ENCODE measurements at regions of chr2 and their contacts with region 1.

Region 1: GRCh38 chr2:69464575-69464974 is 27.3 kb upstream of the NFU1 start:
- DNase-seq: peak; percentile 69
- H3K4me3 Mint-ChIP-seq: no peak overlapping the region
- H3K27ac Mint-ChIP-seq: peak overlapping the region; percentile 84
- H3K4me1 Mint-ChIP-seq: peaks cover 8% of the 10 kb centered on the region
- H3K27me3 Mint-ChIP-seq: no peaks in the 10 kb centered on the region
- CTCF ChIP-seq: no peak

Region 2: DNA sequence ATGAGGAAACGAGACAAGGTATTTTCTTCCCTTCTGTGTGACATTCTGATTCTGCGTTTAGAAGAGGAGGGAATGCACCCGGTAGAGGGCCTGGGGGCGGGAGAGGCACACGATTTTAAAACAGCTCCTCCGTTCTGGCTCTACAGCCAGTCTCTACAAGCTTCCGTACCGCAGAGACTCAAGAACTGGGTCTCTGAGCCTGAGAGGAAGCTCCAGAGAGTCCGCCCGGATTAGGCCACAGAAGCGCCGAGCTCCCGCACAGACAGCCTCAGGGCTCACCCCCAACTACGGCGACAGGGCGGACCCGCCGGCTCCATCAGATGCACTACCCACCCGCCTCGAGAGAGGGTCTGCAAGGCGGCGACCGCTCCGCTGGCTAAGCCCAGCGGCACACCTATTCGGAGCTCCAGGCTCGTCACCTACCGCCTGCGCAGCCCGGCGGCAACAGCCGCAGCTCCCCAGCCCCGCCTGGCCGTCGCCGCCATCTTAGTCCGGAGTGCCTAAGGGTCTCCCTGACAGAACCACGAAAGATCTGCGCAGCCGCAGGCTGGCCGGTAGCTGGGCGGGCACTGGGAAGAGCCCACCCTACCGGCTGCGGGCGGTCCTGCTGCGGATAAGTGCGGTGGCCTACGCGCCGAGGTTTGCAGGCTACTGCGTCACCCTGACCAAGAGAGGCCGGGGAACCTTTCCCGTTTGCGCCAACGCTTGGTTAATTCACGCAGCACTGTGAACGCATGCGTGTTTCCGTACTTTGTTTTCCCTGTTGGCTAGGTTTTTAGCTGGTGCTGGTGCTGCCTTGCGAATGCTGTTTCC is 27.4 kb before region 1 on chr2 and contains the start of gene NFU1:
- CTCF ChIA-PET with region 1: interaction called, 3 read pairs
- POLR2A ChIA-PET with region 1: interaction called, 23 read pairs
- intact Hi-C with region 1: no loop called
- DNase-seq: peak; percentile 86
- H3K4me3 Mint-ChIP-seq: peak within 1 kb of the TSS; percentile 81
- H3K27ac Mint-ChIP-seq: peak within 1 kb of the TSS; percentile 99
- H3K4me1 Mint-ChIP-seq: peaks cover 13% of the 10 kb centered on the region
- H3K27me3 Mint-ChIP-seq: no peaks in the 10 kb centered on the region
- CTCF ChIP-seq: peak; percentile 19
- total RNA-seq, gene NFU1: 29.5 and 32.3 TPM in 2 replicates

Region 3: DNA sequence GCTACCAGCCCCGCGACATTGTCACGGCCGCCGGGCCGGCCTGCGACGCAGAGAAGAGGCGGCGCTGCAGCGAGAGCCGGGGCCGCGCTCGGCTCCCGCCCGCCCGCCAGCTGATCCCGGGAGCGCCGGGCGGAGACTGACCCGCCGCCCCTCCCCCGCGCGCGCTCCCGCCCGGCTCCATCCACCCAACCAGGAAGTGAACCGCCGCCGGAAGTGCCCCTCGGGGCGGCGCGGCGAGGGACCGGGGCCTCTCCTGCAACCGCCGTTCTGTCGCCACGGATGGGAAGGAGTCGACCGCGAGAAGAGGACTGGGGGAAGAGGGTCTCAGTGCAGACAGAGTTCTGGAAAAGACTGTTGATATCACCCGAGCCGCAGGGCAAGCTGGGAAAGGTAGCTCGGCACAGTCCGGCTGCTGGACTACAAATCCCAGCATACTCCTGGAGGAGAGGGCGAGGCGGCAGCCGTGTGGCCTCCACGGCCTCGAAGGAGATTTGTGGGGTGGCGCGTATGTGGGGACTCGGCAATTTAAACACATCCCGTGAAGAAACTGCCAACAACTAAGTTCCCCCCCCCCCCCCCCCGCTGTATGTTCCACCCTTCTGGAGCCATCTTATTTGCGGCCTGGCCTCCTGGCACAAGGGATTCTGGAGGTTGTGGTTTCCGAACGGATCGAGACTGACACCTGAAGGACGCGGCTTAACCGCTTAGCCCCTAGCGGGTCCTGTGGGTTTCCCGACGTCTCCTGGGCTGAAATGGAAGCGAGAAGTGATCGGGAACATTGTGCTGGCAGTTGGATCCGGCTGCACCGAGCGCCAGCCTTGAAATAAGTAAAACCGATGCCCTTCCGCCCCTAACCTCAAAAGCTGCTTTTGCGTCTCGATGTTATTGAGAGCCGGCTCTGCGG is 179.3 kb after region 1 on chr2 and contains the start of gene AAK1:
- CTCF ChIA-PET with region 1: no interaction called
- POLR2A ChIA-PET with region 1: no interaction called
- intact Hi-C with region 1: no loop called
- DNase-seq: peak; percentile 86
- H3K4me3 Mint-ChIP-seq: peak within 1 kb of the TSS; percentile 73
- H3K27ac Mint-ChIP-seq: peak within 1 kb of the TSS; percentile 74
- H3K4me1 Mint-ChIP-seq: peaks cover 48% of the 10 kb centered on the region
- H3K27me3 Mint-ChIP-seq: no peaks in the 10 kb centered on the region
- CTCF ChIP-seq: no peak
- total RNA-seq, gene AAK1: 75.8 and 108 TPM in 2 replicates

Region 4: GRCh38 chr2:69789175-69789721 is 324.7 kb after region 1 on chr2:
- CTCF ChIA-PET with region 1: no interaction called
- POLR2A ChIA-PET with region 1: no interaction called
- intact Hi-C with region 1: no loop called
- DNase-seq: no peak
- H3K4me3 Mint-ChIP-seq: no peak overlapping the region
- H3K27ac Mint-ChIP-seq: no peak overlapping the region
- H3K4me1 Mint-ChIP-seq: no peaks in the 10 kb centered on the region
- H3K27me3 Mint-ChIP-seq: no peaks in the 10 kb centered on the region
- CTCF ChIP-seq: no peak

Measured in MCF 10A (cell line).